ENCODE measurements at regions of chr10 and their contacts with region 1.

Region 1: GRCh38 chr10:35074266-35074665 is 15.9 kb downstream of the CUL2 start:
- DNase-seq: no peak
- ATAC-seq: no peak
- H3K4me3 ChIP-seq: no peak overlapping the region
- H3K4me3 Mint-ChIP-seq: no peak overlapping the region
- H3K27ac ChIP-seq: no peak overlapping the region
- H3K27ac Mint-ChIP-seq: no peak overlapping the region
- H3K4me1 ChIP-seq: no peaks in the 10 kb centered on the region
- H3K4me1 Mint-ChIP-seq: peaks cover 25% of the 10 kb centered on the region
- H3K27me3 ChIP-seq: no peaks in the 10 kb centered on the region
- H3K27me3 Mint-ChIP-seq: no peaks in the 10 kb centered on the region
- CTCF ChIP-seq: no peak

Region 2: DNA sequence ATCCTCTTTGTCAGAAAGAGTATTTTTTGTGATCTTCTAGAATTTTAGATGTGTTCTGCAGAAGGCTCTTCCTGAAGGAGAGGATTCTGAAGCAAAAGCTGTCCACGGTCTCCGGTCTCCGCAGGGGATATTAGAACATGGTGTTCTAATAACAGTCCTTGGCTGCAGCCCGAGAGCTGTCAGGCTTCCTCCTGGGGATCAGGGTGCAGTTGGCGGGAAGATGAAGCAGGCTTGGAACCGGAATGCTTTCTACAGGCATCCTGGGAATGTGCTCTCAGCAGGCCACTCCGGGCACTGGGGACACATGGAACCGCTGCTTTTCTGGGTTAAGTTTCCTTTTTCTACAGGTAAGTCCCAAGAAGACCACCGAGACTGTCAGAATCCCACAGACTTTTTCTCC is 140.6 kb before region 1 on chr10:
- CTCF ChIA-PET with region 1: no interaction called
- POLR2A ChIA-PET with region 1: no interaction called
- intact Hi-C with region 1: no loop called
- DNase-seq: no peak
- ATAC-seq: no peak
- H3K4me3 ChIP-seq: no peak overlapping the region
- H3K4me3 Mint-ChIP-seq: no peak overlapping the region
- H3K27ac ChIP-seq: no peak overlapping the region
- H3K27ac Mint-ChIP-seq: no peak overlapping the region
- H3K4me1 ChIP-seq: no peaks in the 10 kb centered on the region
- H3K4me1 Mint-ChIP-seq: no peaks in the 10 kb centered on the region
- H3K27me3 ChIP-seq: no peaks in the 10 kb centered on the region
- H3K27me3 Mint-ChIP-seq: no peaks in the 10 kb centered on the region
- CTCF ChIP-seq: no peak

Region 3: GRCh38 chr10:34994565-34995142 is 79.6 kb before region 1 on chr10:
- CTCF ChIA-PET with region 1: no interaction called
- POLR2A ChIA-PET with region 1: no interaction called
- intact Hi-C with region 1: no loop called
- DNase-seq: peak; percentile 11 to 66 (median 36)
- ATAC-seq: peak; percentile 76
- H3K4me3 ChIP-seq: no peak overlapping the region
- H3K4me3 Mint-ChIP-seq: no peak overlapping the region
- H3K27ac ChIP-seq: no peak overlapping the region
- H3K27ac Mint-ChIP-seq: peak overlapping the region; percentile 31
- H3K4me1 ChIP-seq: peaks cover 8% of the 10 kb centered on the region
- H3K4me1 Mint-ChIP-seq: peaks cover 10% of the 10 kb centered on the region
- H3K27me3 ChIP-seq: no peaks in the 10 kb centered on the region
- H3K27me3 Mint-ChIP-seq: no peaks in the 10 kb centered on the region
- CTCF ChIP-seq: peak; percentile 69

Region 4: DNA sequence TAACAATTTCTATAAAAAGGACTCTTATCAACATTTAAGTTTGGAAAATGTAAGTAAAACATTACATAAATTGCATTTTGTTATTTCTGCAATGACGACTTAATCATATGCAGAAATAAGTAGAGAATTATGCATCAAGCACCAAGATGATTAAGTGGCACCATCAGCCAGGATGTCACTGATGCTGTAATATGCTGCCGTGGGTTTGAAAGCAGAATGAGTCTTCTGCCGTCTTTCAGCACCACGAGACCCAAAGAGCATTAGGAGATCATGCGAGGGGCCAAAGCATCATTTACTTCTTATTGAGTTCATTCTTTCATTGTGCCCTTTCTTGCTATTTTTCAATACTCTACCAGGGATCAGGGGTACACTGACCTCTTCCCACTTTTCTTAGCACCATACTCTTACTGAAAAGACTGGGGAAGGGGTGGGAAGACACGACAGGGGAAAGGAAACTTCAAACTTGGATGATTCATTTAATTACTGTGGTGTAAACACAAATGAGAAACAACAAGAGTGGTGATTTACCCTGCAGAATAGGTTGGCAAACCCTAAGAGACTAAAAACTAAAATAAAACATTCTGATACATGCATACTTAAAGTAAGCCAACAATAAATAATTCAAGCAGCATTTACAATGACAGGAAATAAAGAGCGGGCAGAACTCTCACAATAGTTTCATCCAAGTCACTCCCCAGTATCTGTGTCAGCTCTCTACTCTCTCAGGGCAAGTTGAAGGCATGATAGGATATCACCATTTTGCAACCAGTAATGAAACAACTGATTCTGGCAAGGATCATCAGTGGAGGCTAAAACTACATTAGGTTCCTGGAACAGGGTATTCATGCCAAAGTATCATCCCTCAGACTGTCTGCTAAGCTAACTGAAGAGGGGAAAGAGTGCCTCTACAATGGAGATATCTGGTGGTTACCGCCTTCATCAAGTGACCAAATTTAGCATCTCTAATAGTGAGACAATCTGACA is 54.9 kb before region 1 on chr10:
- CTCF ChIA-PET with region 1: no interaction called
- POLR2A ChIA-PET with region 1: no interaction called
- intact Hi-C with region 1: no loop called
- DNase-seq: no peak
- ATAC-seq: no peak
- H3K4me3 ChIP-seq: no peak overlapping the region
- H3K4me3 Mint-ChIP-seq: no peak overlapping the region
- H3K27ac ChIP-seq: no peak overlapping the region
- H3K27ac Mint-ChIP-seq: peak overlapping the region; percentile 37
- H3K4me1 ChIP-seq: no peaks in the 10 kb centered on the region
- H3K4me1 Mint-ChIP-seq: no peaks in the 10 kb centered on the region
- H3K27me3 ChIP-seq: no peaks in the 10 kb centered on the region
- H3K27me3 Mint-ChIP-seq: no peaks in the 10 kb centered on the region
- CTCF ChIP-seq: no peak

Region 5: DNA sequence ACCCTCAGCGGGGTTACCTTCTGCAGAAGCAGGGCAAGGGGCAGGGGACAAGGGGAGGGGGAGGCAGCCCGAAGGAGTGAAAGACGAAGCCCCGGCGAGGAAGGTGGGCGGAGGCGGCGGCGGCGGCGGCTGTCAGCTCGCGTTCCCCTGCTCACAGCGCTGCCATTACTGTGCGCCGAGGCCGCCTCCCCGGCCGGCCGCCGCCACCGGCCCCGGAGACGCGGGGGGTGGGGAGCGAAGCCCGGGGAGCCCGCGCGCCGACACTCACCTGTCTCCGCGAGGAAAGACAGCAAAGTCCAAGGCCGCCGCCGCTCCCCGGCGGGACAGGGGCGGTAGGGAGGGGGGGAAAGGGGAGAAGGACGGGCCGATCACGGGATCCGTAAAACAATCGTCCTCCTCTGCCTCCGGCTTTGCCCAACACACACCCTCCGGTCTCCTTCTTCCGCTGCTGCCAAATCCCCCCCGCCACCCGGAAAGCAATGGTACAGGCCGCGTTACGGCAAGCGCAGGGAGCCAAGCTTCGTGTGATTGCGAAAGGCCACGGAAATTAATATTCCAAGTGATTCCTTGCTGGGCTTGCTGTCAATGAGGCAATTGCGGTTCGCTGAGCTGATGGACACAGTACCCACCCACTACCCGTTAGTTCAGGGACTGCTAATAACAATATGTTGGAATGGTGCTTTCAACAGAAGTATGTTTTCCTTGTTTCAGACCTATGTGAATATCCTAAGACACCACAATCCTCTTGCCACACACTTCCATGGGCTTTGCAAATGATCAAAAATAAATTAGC is 16.1 kb after region 1 on chr10 and contains the start of gene CUL2:
- CTCF ChIA-PET with region 1: no interaction called
- POLR2A ChIA-PET with region 1: no interaction called
- intact Hi-C with region 1: loop called in 1 of 2 experiments (anchors 1 kb)
- DNase-seq: peak; percentile 86 to 96 (median 90)
- ATAC-seq: peak; percentile 92
- H3K4me3 ChIP-seq: peak within 1 kb of the TSS; percentile 91
- H3K4me3 Mint-ChIP-seq: peak within 1 kb of the TSS; percentile 98
- H3K27ac ChIP-seq: peak within 1 kb of the TSS; percentile 94 to 96
- H3K27ac Mint-ChIP-seq: peak within 1 kb of the TSS; percentile 93
- H3K4me1 ChIP-seq: peaks cover 44% of the 10 kb centered on the region
- H3K4me1 Mint-ChIP-seq: peaks cover 56% of the 10 kb centered on the region
- H3K27me3 ChIP-seq: no peaks in the 10 kb centered on the region
- H3K27me3 Mint-ChIP-seq: peaks cover 7% of the 10 kb centered on the region
- CTCF ChIP-seq: no peak
- total RNA-seq, gene CUL2: 30.1 to 32.4 TPM